Body of pancreas (tissue), 4 donors: ENCODE measurements at regions of chr7 and their contacts with region 1.

Region 1: DNA sequence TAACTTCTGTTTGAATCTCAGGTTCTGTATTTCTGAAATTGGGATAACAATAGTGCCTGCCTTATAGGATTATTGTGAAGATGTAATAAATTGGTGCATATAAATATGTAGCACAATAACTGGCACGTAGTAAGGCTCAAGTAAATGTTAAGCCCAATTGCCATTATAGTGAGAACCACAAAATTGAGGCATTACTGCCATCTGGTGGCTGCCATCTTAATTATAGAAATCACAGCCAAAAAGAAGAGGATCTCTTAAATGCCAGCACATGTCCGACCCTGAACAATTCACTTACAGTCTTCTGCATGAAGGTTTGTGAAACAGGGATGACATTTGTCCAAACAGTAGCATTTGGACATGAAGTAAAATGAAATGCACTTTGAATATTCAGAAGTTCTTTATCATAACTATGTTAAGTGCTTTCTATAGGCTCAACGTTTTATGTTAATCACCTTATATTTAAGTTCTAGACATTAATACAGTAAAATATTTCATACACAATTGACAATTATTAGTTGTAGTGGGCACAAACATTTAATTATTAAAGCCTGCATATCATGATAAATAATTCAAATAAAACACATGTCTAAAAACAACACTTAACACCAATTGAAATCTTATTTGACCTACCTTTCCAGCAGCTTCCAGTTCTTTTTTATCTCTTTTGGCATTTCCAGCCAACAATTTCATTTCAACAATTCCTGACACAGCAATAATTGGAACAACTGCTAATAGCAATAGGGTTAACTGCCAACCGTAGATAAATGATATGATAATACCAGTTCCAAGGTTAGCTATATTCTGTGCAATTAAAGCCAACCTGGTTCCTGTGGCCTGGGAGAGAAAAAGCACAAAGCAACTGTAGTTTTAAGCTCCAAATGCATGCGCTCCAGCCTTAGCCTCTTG is 58.5 kb downstream of the ABCB4 start:
- DNase-seq: peak; percentile 53 to 70 (median 66)
- ATAC-seq: peak; percentile 64
- H3K4me3 ChIP-seq: no peak overlapping the region
- H3K27ac ChIP-seq: no peak overlapping the region
- H3K4me1 ChIP-seq: no peaks in the 10 kb centered on the region
- H3K27me3 ChIP-seq: no peaks in the 10 kb centered on the region
- CTCF ChIP-seq: peak in 6 of 7 experiments; percentile 46 to 79 (median 71)
- POLR2A ChIP-seq: no peak

Region 2: GRCh38 chr7:87312215-87312865 is 104.6 kb before region 1 on chr7:
- intact Hi-C with region 1: loop called (anchors 2 kb)
- DNase-seq: peak; percentile 60 to 62 (median 61)
- ATAC-seq: peak; percentile 83
- H3K4me3 ChIP-seq: no peak overlapping the region
- H3K27ac ChIP-seq: no peak overlapping the region
- H3K4me1 ChIP-seq: no peaks in the 10 kb centered on the region
- H3K27me3 ChIP-seq: no peaks in the 10 kb centered on the region
- CTCF ChIP-seq: peak; percentile 85 to 99 (median 90)
- POLR2A ChIP-seq: no peak